ENCODE measurements at regions of chr10 and their contacts with region 1.

Region 1: DNA sequence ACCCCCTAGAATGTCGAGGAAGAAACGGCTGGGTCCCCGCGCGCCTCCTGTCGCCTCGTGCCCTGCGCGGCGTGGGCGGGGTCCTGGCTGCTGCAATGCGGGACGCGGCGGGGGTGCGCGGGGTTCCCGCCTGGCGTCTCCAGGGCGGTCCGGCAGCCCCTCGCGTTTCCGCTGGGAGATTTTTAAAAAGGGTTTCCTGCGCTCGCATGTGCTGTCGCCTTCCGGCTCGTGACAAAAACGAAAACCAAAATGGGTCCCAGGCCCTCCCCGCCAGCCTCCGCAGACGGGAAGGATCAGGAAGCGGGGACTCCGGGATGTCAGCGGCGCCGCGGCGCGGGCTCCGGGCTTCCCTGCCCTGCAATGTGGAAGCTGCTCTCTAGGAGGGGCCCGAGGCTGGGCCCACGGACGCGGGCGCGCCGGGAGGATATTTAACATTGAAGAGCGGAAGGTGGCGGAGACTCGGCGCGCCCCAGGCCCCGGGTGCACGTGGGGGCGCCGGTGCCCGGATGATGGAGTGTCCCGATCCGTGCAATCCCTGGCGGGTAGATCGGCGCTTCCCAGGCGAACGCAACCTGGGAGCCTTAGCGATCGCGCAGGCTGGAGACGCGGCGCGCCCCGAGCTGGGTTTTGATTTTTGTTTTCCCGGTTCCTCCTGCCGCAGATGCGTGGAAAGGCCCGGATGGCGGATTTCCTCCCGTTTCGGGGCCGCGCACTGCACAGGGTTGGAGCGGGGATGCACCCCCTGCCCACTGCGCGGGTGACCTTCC is 1.0 kb downstream of the PFKP start:
- DNase-seq: peak; percentile 26 to 76 (median 49)
- ATAC-seq: peak; percentile 61
- H3K4me3 ChIP-seq: peak overlapping the region; percentile 87
- H3K4me3 Mint-ChIP-seq: peak overlapping the region; percentile 80 to 98 (median 89)
- H3K27ac ChIP-seq: peak overlapping the region; percentile 70
- H3K27ac Mint-ChIP-seq: peak overlapping the region; percentile 8 to 90 (median 70)
- H3K4me1 ChIP-seq: peaks cover 8% of the 10 kb centered on the region in 2 donors
- H3K4me1 Mint-ChIP-seq: peaks cover 25 to 40% (median 34%) of the 10 kb centered on the region in 7 donors
- H3K27me3 ChIP-seq: no peaks in the 10 kb centered on the region
- H3K27me3 Mint-ChIP-seq: peaks cover 0 to 16% (median 0%) of the 10 kb centered on the region in 5 donors

Region 2: DNA sequence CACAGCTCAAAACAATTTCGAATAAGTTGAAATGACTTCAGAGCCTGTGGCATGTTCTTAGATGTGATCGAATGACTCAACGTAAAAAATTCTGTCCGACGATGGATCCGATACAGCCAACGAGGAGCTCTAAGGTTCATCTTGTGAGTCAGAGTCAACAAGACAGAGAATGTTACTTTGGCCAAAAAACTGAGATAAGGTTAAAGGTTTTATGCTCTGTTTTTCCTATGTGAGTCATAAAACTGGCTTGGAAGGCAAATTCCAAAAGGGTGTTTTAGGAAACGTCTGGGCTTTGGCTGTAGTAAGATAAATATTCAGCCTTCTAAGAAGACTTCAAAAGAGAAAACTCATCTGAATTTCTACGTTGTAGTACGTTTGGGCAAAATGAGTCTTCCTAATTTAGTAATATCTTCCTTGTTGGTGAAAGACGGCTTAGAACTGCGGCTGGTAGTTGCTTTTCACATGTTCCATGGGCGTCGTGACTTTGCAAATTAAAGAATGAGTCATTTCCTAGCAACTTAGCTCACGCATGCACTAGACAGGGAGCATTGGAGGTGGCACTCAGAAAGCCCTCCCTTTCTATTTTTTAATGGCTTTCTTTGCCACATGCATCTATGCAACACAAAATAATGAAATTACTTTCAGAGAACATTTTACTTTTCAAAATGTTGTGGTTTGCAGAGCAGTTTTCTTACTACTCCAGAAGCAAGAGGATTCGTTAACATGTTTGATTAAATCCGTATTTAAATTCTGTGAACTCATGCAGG is 27.2 kb after region 1 on chr10:
- CTCF ChIA-PET with region 1: interaction called, 3 read pairs
- POLR2A ChIA-PET with region 1: no interaction called
- intact Hi-C with region 1: loop called in 1 of 2 experiments (anchors 2 kb)
- DNase-seq: peak in 1 of 9 donors; percentile 50
- ATAC-seq: peak; percentile 85
- H3K4me3 ChIP-seq: no peak overlapping the region
- H3K4me3 Mint-ChIP-seq: peak overlapping the region in 3 of 10 donors; percentile 23 to 72 (median 26)
- H3K27ac ChIP-seq: no peak overlapping the region
- H3K27ac Mint-ChIP-seq: peak overlapping the region in 2 of 9 donors; percentile 34 to 89
- H3K4me1 ChIP-seq: peaks cover 0 to 14% of the 10 kb centered on the region in 2 donors
- H3K4me1 Mint-ChIP-seq: peaks cover 34 to 56% (median 40%) of the 10 kb centered on the region in 7 donors
- H3K27me3 ChIP-seq: no peaks in the 10 kb centered on the region
- H3K27me3 Mint-ChIP-seq: no peaks in the 10 kb centered on the region

Region 3: DNA sequence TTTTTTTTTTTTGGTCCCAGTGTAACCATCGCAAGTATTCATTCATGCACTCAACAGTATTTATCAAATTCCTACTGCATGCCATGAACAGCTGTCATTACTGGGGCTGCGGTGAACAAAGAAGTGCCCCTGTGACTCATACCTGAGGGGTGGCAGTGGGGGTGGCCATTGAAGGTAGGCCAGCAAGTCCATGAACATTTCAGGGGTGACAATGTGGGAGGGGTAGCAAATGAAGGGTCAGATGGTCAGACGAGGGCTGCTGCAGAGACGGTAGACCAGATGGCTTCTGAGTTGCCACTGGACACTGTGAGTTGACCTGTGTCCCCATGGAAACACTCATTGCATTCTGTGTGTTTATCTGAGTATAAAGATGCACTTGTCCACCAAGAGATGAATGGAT is 196.7 kb after region 1 on chr10:
- CTCF ChIA-PET with region 1: no interaction called
- POLR2A ChIA-PET with region 1: no interaction called
- intact Hi-C with region 1: no loop called
- DNase-seq: no peak
- ATAC-seq: no peak
- H3K4me3 ChIP-seq: no peak overlapping the region
- H3K4me3 Mint-ChIP-seq: no peak overlapping the region
- H3K27ac ChIP-seq: no peak overlapping the region
- H3K27ac Mint-ChIP-seq: no peak overlapping the region
- H3K4me1 ChIP-seq: no peaks in the 10 kb centered on the region
- H3K4me1 Mint-ChIP-seq: peaks cover 0 to 1% (median 0%) of the 10 kb centered on the region in 7 donors
- H3K27me3 ChIP-seq: no peaks in the 10 kb centered on the region
- H3K27me3 Mint-ChIP-seq: peaks cover 5 to 22% (median 9%) of the 10 kb centered on the region in 5 donors

Measured in naive thymus-derived CD4-positive, alpha-beta T cell (primary cell).